ENCODE measurements at regions of chr19 and their contacts with region 1.

Region 1: DNA sequence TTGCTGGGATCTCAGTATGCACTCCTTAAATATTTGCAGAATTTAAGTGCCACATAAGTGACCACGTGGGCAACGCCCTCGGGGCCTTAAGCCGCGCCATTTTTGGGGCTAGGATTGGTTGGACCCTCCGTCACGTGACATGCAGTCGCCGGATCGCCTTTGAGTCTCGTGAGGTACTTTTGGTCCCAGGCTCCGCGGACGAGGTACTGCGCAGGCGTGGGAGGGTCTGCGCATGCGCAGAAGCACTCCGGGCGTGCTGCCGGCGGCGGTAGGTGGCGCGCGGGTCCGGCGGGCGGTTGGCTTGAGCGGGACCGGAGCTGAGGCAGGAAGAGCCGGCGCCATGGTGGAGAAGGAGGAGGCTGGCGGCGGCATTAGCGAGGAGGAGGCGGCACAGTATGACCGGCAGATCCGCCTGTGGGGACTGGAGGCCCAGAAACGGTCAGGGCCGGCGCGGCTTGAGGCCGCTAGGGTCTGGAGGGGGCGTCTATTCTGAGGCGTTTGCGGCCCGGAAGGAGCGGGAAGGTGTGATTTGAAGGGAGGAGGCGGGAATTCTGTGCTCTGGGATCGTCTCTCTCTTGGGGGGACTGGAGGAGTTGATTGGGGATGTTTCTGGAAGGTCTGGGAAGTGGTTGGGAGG is at the start of gene SAE1:
- DNase-seq: peak; percentile 82 to 98 (median 92)
- ATAC-seq: peak; percentile 91
- H3K4me3 ChIP-seq: peak within 1 kb of the TSS; percentile 95
- H3K4me3 Mint-ChIP-seq: peak within 1 kb of the TSS; percentile 96
- H3K27ac ChIP-seq: peak within 1 kb of the TSS; percentile 68 to 74
- H3K27ac Mint-ChIP-seq: peak within 1 kb of the TSS; percentile 83
- H3K4me1 ChIP-seq: peaks cover 44% of the 10 kb centered on the region
- H3K4me1 Mint-ChIP-seq: peaks cover 52% of the 10 kb centered on the region
- H3K27me3 ChIP-seq: no peaks in the 10 kb centered on the region
- H3K27me3 Mint-ChIP-seq: no peaks in the 10 kb centered on the region
- CTCF ChIP-seq: peak; percentile 73
- total RNA-seq, gene SAE1: 29.6 to 30.9 TPM

Region 2: DNA sequence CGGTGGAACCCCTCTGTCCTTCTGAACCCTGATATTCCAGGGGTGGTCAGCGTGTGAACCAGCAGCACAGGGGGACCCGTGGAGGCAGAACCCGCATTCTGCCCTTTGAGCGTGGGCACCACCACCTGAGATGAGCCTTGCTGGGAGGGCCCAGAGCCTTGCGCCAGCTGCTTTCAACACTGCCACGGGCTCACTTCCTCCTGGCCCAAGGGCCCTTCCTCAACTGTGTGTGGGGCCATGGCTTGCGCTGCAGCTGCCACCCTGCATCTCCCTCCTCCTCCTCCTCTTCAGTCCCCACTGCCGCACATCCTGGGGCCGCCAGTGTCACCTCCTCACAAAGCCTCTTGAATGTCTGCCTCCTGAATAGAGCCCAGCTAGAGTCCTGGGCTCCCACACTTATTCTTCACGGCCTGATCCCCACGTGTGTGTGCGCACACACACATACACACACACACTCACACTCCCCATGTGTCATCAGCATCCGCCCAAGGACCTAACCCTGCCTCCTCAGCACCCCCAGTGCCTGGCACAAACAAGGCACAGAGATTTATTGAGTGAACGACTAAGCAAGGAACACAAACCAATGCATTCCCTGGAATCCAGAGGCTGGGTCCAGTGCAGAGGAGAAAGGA is 55.4 kb before region 1 on chr19:
- CTCF ChIA-PET with region 1: interaction called, 16 read pairs
- POLR2A ChIA-PET with region 1: interaction called, 6 read pairs
- intact Hi-C with region 1: loop called (anchors 1 kb)
- DNase-seq: peak in 2 of 14 experiments; percentile 24 to 39
- ATAC-seq: no peak
- H3K4me3 ChIP-seq: no peak overlapping the region
- H3K4me3 Mint-ChIP-seq: no peak overlapping the region
- H3K27ac ChIP-seq: no peak overlapping the region
- H3K27ac Mint-ChIP-seq: no peak overlapping the region
- H3K4me1 ChIP-seq: peaks cover 4% of the 10 kb centered on the region
- H3K4me1 Mint-ChIP-seq: peaks cover 6% of the 10 kb centered on the region
- H3K27me3 ChIP-seq: no peaks in the 10 kb centered on the region
- H3K27me3 Mint-ChIP-seq: no peaks in the 10 kb centered on the region
- CTCF ChIP-seq: no peak